ENCODE measurements at regions of chr3 and their contacts with region 1.

Region 1: GRCh38 chr3:171566803-171567422 is 106.7 kb upstream of the TNIK start:
- DNase-seq: no peak
- ATAC-seq: peak; percentile 58
- H3K4me3 ChIP-seq: no peak overlapping the region
- H3K27ac ChIP-seq: no peak overlapping the region
- H3K4me1 ChIP-seq: peaks cover 20% of the 10 kb centered on the region
- H3K27me3 ChIP-seq: no peaks in the 10 kb centered on the region
- CTCF ChIP-seq: peak; percentile 81

Region 2: GRCh38 chr3:170961616-170962400 is 605.1 kb before region 1 on chr3:
- intact Hi-C with region 1: loop called (anchors 10 kb)
- DNase-seq: no peak
- ATAC-seq: no peak
- H3K4me3 ChIP-seq: no peak overlapping the region
- H3K27ac ChIP-seq: no peak overlapping the region
- H3K4me1 ChIP-seq: no peaks in the 10 kb centered on the region
- H3K27me3 ChIP-seq: no peaks in the 10 kb centered on the region
- CTCF ChIP-seq: peak; percentile 55

Region 3: DNA sequence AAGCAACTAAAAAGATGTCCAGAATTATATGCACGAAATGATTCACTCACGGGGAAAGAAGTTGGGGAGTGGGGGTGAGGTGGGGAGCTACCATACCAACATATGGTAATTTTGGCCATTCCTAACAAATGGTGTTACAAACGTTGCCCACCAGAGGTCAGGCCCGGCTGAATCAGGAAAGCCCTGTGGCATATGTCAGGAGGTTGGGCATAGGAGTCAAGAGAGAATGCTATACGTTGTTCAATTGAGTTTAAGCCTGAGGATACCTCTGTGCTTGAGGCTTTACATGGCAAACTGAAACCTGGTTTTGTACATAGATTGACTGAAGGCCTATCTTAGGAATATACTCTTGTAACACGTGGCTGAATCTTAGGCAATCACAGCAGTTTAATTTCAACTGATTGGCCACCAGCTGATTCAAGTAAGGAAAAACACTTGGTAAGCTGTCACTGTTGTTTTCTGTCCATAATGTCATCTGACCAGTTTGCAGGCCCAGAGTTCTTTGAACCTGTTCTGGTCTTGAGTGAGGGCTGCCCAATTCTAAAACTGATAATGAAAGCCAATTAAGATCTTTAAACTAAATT is 517.0 kb before region 1 on chr3:
- intact Hi-C with region 1: loop called (anchors 5 kb)
- DNase-seq: peak; percentile 67
- ATAC-seq: peak; percentile 90
- H3K4me3 ChIP-seq: no peak overlapping the region
- H3K27ac ChIP-seq: no peak overlapping the region
- H3K4me1 ChIP-seq: no peaks in the 10 kb centered on the region
- H3K27me3 ChIP-seq: no peaks in the 10 kb centered on the region
- CTCF ChIP-seq: peak; percentile 57

Region 4: GRCh38 chr3:171157286-171157685 is 409.6 kb before region 1 on chr3:
- intact Hi-C with region 1: loop called (anchors 10 kb)
- DNase-seq: no peak
- ATAC-seq: no peak
- H3K4me3 ChIP-seq: no peak overlapping the region
- H3K27ac ChIP-seq: no peak overlapping the region
- H3K4me1 ChIP-seq: no peaks in the 10 kb centered on the region
- H3K27me3 ChIP-seq: no peaks in the 10 kb centered on the region
- CTCF ChIP-seq: no peak

Region 5: DNA sequence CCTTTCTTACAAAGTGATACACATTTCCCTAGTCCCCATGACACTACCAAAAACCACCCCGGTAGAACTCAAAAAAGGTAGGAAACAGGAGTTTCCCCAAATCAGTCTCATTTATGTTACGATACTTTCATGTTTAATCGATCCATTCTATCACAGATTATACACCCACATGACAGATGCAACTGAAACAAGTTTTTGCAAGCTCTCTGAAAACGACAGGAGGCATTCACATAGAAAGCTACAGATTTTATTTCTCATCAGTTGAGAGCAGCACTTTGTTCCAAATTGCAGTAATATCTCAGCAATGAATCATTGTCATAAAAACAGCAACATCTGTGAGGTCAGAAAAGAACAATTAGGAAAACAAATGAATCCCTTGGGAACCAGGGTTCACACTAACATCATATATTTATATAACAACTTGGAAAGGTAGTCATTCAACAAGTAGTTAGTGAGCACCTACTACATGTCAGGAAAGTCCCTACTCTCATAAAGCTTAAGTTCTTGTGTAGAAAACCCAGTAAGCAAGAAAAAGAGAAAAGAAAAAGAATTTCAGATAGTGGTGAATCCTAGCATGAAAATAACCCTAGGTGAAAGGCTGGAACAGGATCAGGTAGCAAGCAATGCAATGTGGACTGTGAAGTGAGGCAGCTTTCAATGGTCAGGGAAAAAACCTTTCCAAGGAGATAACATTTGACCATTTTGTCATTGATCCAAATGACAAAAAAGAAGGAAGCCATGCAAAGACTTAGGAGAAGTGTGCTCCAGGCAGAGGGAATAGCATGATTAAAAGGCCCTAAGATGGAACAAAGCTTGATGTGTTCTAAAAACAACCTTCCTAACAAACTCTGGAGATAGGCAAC is 235.1 kb after region 1 on chr3:
- intact Hi-C with region 1: no loop called
- DNase-seq: no peak
- ATAC-seq: no peak
- H3K4me3 ChIP-seq: no peak overlapping the region
- H3K27ac ChIP-seq: no peak overlapping the region
- H3K4me1 ChIP-seq: peaks cover 37% of the 10 kb centered on the region
- H3K27me3 ChIP-seq: no peaks in the 10 kb centered on the region
- CTCF ChIP-seq: no peak

Measured in upper lobe of right lung (tissue), 1 donor.